ENCODE measurements at regions of chr3 and their contacts with region 1.

Region 1: DNA sequence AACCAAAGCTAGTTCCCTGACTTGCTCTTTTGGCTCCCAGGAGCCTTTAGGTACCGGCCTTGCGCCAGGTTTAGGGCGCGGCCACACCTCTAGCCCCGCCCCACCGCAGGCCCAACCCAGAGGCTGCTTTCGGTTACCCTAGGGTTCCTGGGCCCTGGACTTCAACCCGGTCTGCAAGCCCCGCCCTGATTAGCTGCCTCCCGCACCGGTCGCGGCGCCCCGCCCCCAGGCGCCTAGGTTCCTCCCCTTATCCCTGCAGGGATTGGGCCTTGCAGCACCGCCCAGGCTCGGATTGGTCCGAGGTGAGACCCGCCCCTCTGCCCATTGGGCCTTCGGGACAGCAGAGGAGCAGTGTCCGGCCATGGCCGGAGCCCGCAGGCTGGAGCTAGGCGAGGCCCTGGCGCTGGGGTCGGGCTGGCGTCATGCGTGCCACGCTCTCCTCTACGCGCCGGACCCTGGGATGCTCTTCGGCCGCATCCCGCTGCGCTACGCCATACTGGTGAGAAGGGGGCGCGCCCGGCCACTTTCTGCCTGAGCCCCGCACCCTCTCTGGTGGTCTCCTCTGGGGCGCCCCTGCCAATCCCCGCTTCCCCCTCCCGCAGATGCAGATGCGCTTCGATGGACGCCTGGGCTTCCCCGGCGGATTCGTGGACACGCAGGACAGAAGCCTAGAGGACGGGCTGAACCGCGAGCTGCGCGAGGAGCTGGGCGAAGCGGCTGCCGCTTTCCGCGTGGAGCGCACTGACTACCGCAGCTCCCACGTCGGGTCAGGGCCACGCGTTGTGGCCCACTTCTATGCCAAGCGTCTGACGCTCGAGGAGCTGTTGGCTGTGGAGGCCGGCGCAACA is at the start of gene NUDT16:
- DNase-seq: peak; percentile 97
- H3K4me3 Mint-ChIP-seq: peak within 1 kb of the TSS; percentile 96
- H3K27ac Mint-ChIP-seq: peak within 1 kb of the TSS; percentile 94
- H3K4me1 Mint-ChIP-seq: peaks cover 41% of the 10 kb centered on the region
- H3K27me3 Mint-ChIP-seq: no peaks in the 10 kb centered on the region
- total RNA-seq, gene NUDT16: 10.2 TPM in 2 replicates

Region 2: DNA sequence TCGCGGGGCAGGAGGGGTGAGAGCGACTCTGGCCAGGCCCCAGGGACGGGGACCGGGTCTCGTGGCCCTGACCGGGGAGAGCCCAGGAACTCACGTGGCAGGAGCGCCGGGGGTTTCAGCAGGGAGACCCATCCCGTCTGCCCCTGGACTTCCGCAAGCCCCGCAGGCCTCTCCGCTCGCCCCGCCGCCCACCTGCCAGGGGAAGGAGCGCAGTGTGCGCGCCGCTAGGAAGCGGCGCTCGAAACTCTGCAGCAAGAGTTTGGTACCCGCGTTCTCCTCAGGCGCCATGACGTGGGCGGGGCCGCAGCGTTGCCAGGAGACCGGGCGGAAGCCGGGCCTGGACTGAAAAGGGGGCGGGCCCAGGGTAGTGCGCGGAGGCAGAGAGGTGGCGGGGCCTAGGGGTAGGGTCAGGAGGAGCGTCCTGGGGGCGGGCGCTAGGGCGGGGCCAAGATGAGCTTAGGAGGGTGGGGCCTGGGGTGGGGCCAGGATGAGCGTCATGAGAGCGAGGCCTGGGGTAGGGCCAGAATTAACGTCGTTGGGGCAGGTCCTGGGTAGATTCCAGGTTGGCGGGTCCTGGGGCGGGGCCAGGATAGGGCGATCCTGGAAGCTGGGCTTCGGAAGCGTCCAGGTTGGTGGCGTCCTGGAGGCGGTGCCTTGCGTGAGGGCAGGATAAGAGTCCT is 1270.3 kb before region 1 on chr3:
- intact Hi-C with region 1: loop called (anchors 5 kb)
- DNase-seq: peak; percentile 97
- H3K4me3 Mint-ChIP-seq: peak overlapping the region; percentile 92
- H3K27ac Mint-ChIP-seq: peak overlapping the region; percentile 98
- H3K4me1 Mint-ChIP-seq: peaks cover 13% of the 10 kb centered on the region
- H3K27me3 Mint-ChIP-seq: peaks cover 10% of the 10 kb centered on the region

Region 3: DNA sequence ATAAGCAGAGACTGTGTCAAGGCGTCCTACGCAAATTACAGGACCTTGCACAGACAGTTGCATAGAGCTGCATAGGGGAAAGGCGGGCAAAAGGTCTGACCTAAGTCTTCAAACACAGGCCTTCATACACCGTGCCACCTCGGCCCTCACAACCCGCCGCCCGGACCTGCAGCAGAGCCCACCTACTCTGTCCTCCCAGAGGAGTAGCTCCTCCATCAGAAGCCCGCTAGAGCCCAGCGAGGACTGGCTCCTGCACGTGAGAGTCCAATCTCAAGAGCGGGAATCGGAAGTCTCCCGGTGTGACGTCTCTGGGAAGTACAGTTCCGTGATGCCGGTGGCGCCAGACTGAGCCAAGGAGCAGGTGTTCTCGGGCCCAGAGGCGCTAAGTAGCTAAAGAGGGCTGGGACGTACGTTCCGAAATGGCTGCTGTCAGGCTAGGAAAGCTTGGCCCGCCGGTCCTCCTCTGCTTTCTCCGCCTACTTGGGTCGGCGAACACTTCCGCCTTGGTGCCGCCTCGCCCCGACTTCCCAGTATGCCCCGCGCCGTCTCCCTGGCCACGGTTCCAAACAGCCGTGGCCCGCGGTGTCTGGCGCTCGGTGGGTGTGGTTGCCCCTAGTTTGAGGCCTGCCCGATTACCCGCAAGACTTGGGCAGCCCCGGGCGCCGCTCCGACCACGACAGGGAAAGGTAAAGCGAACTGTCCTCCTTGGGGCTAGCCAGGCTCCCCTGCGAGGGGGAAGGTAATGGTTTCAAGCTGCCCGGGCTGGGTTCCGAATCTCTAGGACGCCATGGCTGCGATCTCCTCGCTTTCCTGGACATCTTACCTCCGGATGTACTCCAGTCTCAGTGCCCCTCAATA is 355.1 kb before region 1 on chr3 and contains the starts of genes ASTE1 and NEK11:
- intact Hi-C with region 1: loop called (anchors 5 kb)
- DNase-seq: peak; percentile 89
- H3K4me3 Mint-ChIP-seq: peak within 1 kb of the TSS; percentile 88
- H3K27ac Mint-ChIP-seq: peak within 1 kb of the TSS; percentile 93
- H3K4me1 Mint-ChIP-seq: peaks cover 34% of the 10 kb centered on the region
- H3K27me3 Mint-ChIP-seq: peaks cover 4% of the 10 kb centered on the region
- total RNA-seq, gene ASTE1: 7.4 and 8.0 TPM in 2 replicates
- total RNA-seq, gene NEK11: 1.1 and 1.2 TPM in 2 replicates

Region 4: DNA sequence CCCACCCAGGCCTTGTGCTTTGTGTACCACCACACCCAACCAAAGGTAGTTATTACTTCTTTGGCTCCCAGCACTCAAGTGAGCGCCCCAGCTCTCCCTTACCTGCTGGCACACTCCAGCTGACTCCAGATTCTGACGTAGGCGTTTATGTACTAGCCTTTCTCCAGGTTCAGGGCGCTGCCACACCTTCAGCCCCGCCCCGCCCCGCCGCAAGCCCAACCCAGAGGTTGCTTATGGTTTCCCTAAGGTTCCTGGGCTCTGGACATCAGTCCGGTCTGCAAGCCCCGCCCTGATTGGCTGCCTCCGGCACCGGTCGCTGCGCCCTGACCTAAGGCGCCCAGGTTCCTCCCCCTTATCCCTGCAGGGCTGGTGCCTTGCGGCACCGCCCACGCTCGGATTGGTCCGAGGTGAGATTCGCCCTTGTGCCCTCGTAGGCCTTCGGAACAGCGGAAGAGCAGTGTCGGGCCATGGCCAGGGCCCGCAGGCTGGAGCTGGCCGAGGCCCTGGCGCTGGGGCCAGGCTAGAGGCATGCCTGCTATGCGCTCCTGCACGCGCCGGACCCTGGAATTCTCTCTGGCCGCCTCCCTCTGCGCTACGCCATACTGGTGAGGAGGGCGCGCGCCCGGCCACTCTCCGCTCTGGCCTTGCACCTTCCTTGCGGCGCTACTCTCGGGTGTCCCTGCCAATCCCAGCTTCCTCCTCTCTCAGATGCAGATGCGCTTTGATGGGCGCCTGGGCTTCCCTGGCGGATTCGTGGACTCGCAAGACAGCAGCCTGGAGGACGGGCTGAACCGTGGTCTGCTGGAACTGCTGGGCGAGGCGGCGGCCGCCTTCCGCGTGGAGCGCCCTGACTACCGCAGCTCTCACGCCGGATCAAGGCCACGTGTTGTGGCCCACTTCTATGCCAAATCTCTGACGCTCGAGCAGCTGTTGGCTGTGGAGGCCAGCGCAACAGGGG is 19.9 kb before region 1 on chr3:
- intact Hi-C with region 1: loop called (anchors 1 kb)
- DNase-seq: no peak
- H3K4me3 Mint-ChIP-seq: peak overlapping the region; percentile 70
- H3K27ac Mint-ChIP-seq: no peak overlapping the region
- H3K4me1 Mint-ChIP-seq: peaks cover 15% of the 10 kb centered on the region
- H3K27me3 Mint-ChIP-seq: peaks cover 20% of the 10 kb centered on the region

Region 5: GRCh38 chr3:131502530-131503245 is 121.0 kb after region 1 on chr3 and contains the start of gene MRPL3:
- intact Hi-C with region 1: loop called (anchors 2 kb)
- DNase-seq: peak; percentile 75
- H3K4me3 Mint-ChIP-seq: peak within 1 kb of the TSS; percentile 99
- H3K27ac Mint-ChIP-seq: peak within 1 kb of the TSS; percentile 97
- H3K4me1 Mint-ChIP-seq: peaks cover 31% of the 10 kb centered on the region
- H3K27me3 Mint-ChIP-seq: no peaks in the 10 kb centered on the region
- total RNA-seq, gene MRPL3: 149 and 157 TPM in 2 replicates